A549 (cell line): ENCODE measurements at regions of chr12 and their contacts with region 1.

Region 1: GRCh38 chr12:48903982-48904411 is 21.3 kb downstream of the FKBP11 start:
- DNase-seq: peak; percentile 92 to 93
- ATAC-seq: peak; percentile 96 to 98
- H3K4me3 ChIP-seq: peak overlapping the region; percentile 52
- H3K27ac ChIP-seq: peak overlapping the region in 1 of 2 experiments; percentile 72; a peak in 3 of 6 replicates
- H3K4me1 ChIP-seq: peaks cover 14% of the 10 kb centered on the region; the same call in 2 of the 3 replicates
- CTCF ChIP-seq: peak; percentile 90
- EP300 ChIP-seq: no peak
- POLR2A ChIP-seq: no peak
- RAD21 ChIP-seq: peak in 1 of 2 experiments; percentile 10; a peak in 1 of 5 replicates

Region 2: DNA sequence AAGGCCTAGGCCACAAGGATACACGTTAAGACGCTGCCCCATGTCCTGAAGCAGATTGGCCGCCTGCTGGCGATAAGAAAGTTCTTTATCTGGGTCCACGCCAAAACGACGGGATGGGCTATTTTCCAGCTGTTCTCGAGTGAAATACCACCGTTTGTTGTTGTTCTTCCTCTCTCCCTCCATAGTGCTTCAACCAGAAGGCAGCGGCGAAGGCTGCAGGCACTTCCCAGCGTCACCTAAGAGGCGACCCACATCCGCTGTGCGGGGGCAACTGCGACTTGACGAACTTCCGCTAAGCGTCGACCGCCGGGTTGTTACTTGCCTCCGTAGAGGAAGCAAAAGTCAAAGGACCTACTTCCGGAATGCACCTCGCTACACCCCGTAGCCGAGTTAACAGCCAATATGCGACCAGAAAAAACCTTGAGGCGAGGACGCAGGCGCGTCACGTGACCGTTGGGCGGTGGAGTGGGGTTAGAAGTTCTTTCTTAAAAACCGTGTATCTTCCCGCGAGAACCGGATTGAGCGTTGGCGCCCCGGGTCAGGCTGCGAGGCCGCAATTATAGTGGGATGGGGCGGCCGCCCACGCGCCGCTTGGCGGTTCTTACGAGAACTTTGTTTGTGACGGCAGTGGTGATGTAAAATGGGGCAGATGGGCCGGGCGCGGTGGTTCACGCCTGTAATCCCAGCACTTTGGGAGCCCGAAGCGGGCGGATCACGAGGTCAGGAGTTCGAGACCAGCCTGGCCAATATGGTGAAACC is 187.3 kb before region 1 on chr12 and contains the start of gene CCNT1:
- CTCF ChIA-PET with region 1: no interaction called
- POLR2A ChIA-PET with region 1: no interaction called
- DNase-seq: peak; percentile 100
- ATAC-seq: peak; percentile 98 to 99
- H3K4me3 ChIP-seq: peak within 1 kb of the TSS; percentile 72
- H3K27ac ChIP-seq: peak within 1 kb of the TSS; percentile 93
- H3K4me1 ChIP-seq: peaks cover 18% of the 10 kb centered on the region
- CTCF ChIP-seq: no peak
- EP300 ChIP-seq: no peak
- POLR2A ChIP-seq: peak; percentile 70
- RAD21 ChIP-seq: no peak
- polyA plus RNA-seq, gene CCNT1: 54.5 and 56.2 TPM in 2 replicates

Region 3: DNA sequence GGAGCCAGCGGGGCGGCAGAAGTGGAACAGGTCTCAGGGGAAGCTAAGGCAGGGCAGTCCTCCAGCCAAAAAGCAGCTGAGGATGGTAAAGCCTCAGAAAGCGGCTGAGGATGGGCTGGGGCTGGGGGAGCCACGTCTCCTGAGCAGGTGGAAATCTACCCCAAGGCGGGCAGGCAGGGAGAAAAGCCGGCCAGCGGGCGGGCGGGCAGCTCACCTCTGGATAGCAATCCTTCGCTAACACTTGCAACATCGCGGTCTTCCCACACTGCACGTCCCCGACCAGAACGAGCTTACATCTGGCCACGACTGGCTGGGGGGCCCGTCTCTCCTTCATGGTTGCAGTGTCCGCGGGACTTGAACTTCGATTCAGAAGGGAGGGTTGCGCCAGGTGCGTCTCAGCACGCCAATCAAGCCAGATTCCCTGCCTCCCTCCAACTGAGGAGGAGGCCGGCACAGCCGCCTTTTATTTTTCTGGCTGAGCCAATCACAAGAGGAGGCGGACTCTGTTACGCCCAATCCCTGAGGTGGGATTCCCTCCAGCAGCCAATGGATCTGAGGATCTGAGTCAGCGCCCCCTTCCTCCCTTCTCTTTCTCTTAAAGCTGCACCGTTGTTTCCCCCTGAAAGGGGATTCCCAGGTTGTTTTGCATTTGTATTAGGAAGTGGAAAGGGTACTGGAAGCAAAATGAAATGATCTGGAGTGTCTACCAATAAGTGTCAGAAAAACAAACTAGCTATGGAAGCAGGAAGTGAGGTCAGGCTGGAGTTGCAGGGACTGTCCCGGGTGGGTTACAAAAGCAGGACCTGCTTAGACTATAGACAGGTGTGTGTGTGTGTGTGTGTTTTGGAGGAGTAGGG is 38.3 kb before region 1 on chr12 and contains the start of gene RND1:
- CTCF ChIA-PET with region 1: interaction called, 18 read pairs
- POLR2A ChIA-PET with region 1: interaction called, 19 read pairs
- DNase-seq: peak; percentile 93 to 98
- ATAC-seq: peak; percentile 87 to 89
- H3K4me3 ChIP-seq: peak within 1 kb of the TSS; percentile 68
- H3K27ac ChIP-seq: peak within 1 kb of the TSS; percentile 83 to 86
- H3K4me1 ChIP-seq: peaks cover 68% of the 10 kb centered on the region
- CTCF ChIP-seq: no peak
- EP300 ChIP-seq: no peak
- POLR2A ChIP-seq: peak; percentile 100
- RAD21 ChIP-seq: no peak
- polyA plus RNA-seq, gene RND1: 37.8 and 54.5 TPM in 2 replicates

Region 4: GRCh38 chr12:48917857-48918537 is 14.0 kb after region 1 on chr12:
- CTCF ChIA-PET with region 1: interaction called, 60 read pairs
- POLR2A ChIA-PET with region 1: interaction called, 11 read pairs
- DNase-seq: no peak
- ATAC-seq: no peak
- H3K4me3 ChIP-seq: no peak overlapping the region
- H3K27ac ChIP-seq: no peak overlapping the region
- H3K4me1 ChIP-seq: no peaks in the 10 kb centered on the region
- CTCF ChIP-seq: no peak
- EP300 ChIP-seq: no peak
- POLR2A ChIP-seq: no peak
- RAD21 ChIP-seq: no peak

Region 5: DNA sequence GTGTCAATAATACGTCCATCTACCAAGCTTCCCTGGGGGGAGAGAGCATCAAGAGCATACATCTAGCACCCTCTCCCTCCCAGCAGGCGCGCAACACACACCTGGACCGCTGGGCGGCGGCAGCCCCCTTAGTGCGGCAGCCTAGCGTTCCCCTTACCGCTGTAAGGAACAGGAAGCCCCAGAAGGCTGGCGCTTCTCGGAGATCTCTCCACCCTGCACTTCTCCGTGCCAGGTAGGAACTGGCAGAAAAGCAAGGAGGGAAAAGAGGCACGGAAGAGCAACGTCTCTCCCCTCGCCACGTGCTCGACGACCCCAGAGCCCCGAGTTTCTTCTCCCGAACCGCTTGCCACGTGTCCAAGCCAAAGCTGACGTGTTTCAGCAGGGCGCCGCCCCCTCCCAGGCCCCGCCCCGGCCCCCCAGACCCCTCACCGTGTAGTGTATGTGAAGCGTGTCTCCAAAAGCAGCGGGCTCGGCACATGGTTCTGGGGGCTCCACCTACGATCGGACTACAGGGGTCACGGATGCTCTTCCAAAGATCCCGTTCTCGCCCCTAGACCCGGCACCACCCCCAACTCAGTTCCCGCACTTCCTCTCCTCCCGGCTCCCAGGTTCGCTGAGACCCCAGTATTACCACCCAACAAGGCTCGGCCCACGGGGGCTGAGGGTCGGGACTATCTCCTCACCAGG is 20.8 kb after region 1 on chr12:
- CTCF ChIA-PET with region 1: interaction called, 60 read pairs
- POLR2A ChIA-PET with region 1: no interaction called
- DNase-seq: peak; percentile 59 to 62
- ATAC-seq: peak; percentile 84 to 86
- H3K4me3 ChIP-seq: peak overlapping the region; percentile 71
- H3K27ac ChIP-seq: peak overlapping the region; percentile 77 to 95
- H3K4me1 ChIP-seq: peaks cover 6% of the 10 kb centered on the region; the same call in 1 of the 3 replicates
- CTCF ChIP-seq: peak; percentile 31; the same call in 2 of the 3 replicates
- EP300 ChIP-seq: no peak
- POLR2A ChIP-seq: no peak
- RAD21 ChIP-seq: peak; percentile 35 to 38; a peak in 3 of 5 replicates

Region 6: DNA sequence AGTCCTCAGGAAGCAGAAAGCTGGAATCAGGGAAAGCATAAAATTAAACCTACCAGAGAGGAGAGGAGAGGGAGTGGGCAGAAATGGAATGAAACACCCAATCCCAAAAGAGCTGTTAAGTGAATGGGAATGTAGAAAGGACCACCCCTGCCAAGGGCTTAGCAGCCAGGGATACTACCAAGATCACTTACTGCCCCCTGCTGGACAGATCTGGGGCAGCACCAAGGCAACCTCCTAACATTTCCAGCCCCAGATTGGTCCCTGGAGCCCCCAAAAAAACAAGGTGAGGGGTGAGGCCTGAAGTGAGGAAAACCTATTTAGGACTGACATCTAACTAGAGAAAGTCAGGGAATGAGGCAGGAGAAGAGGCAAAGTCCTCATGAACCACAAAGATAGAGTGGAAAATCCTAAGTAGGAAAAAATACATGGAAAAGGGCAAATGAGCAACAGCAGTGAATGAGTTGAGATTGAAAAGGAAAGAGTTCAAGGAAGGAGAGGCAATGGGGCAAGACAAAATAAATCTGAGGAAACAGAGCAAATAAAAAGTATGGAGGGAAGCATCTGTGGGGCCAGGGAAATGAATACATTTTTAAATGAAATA is 32.5 kb after region 1 on chr12:
- CTCF ChIA-PET with region 1: interaction called, 36 read pairs
- POLR2A ChIA-PET with region 1: no interaction called
- DNase-seq: peak; percentile 72 to 95
- ATAC-seq: peak; percentile 87 to 91
- H3K4me3 ChIP-seq: no peak overlapping the region
- H3K27ac ChIP-seq: no peak overlapping the region
- H3K4me1 ChIP-seq: no peaks in the 10 kb centered on the region
- CTCF ChIP-seq: peak; percentile 88
- EP300 ChIP-seq: no peak
- POLR2A ChIP-seq: no peak
- RAD21 ChIP-seq: peak; percentile 68 to 70

Region 7: DNA sequence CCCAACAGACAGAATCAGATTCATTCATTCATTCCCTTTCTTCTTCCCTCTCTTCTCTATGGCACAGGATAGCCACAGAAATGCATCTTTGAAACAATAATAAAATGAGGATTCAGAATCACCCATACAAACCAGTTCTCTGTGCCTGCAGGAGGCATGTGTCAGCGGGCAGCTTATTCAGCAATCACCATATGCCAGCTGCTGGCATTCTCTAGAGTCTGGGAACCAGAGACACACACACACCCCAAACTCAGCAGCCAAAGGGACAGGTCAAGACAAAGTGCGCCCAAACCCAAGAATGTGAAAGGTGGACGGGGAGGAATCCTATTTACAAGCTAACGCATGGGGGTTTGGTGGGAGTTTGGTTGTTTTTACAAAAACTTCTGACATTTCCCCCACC is 39.2 kb after region 1 on chr12:
- CTCF ChIA-PET with region 1: interaction called, 16 read pairs
- POLR2A ChIA-PET with region 1: no interaction called
- DNase-seq: no peak
- ATAC-seq: no peak
- H3K4me3 ChIP-seq: no peak overlapping the region
- H3K27ac ChIP-seq: no peak overlapping the region
- H3K4me1 ChIP-seq: no peaks in the 10 kb centered on the region
- CTCF ChIP-seq: no peak
- EP300 ChIP-seq: no peak
- POLR2A ChIP-seq: no peak
- RAD21 ChIP-seq: no peak

Region 8: DNA sequence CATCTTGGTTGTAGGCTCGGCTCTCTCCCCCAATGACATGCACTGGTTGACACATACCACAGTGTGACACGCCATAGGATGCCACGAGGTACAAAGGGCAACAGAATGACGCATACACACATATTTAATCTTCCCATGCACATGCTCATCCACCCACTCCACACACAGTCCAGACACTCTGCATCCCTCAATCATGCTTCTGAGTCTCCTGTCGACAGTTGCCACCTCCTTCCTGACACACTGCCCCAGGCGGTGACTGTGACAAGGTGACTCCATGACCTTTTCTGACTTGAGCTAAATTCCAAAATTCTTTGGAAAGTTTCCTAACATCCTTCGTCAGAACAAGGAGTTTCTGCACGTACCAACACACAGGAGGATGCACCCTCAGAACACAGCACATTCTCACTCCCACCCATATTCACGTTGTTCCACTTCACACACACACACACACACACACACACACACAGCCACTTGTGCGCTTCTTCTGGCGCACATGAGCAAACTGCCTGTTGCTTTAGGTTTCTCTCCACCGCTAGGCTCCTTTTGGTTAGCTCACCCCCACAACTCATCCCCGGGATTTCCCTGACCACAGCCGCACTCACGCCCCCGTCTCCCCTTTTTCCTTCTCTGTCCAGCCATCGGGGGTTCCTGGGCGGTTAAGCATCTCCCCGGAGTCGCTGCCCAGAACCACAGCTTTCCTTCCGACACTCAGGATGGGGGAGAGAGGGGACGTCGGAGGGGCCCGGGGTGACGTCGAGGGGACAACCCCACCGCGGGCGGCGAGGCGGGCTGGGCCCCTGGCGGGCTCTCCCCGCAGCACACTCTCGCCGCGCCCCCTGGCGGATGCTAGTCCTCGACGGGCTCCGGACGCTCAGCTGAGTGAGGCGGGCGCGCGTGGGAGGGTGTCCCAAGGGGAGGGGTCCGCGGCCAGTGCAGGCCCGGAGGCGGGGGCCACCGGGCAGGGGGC is 73.6 kb after region 1 on chr12:
- CTCF ChIA-PET with region 1: interaction called, 14 read pairs
- POLR2A ChIA-PET with region 1: no interaction called
- DNase-seq: peak; percentile 64 to 74
- ATAC-seq: peak; percentile 69 to 85
- H3K4me3 ChIP-seq: peak overlapping the region; percentile 42; the same call in 2 of the 3 replicates
- H3K27ac ChIP-seq: 0 out of 6 replicates have a peak overlapping the region, but pooled peaks of 1 of the 2 experiments have one; percentile 31
- H3K4me1 ChIP-seq: peaks cover 16% of the 10 kb centered on the region; the same call in 2 of the 3 replicates
- CTCF ChIP-seq: peak; percentile 70
- EP300 ChIP-seq: no peak
- POLR2A ChIP-seq: no peak
- RAD21 ChIP-seq: peak in 1 of 2 experiments; percentile 39; a peak in 3 of 5 replicates